ENCODE measurements at regions of chr16 and their contacts with region 1.

Region 1: GRCh38 chr16:19086322-19087199 is 19.1 kb downstream of the COQ7 start:
- DNase-seq: peak; percentile 88 to 90
- ATAC-seq: peak; percentile 92

Region 2: DNA sequence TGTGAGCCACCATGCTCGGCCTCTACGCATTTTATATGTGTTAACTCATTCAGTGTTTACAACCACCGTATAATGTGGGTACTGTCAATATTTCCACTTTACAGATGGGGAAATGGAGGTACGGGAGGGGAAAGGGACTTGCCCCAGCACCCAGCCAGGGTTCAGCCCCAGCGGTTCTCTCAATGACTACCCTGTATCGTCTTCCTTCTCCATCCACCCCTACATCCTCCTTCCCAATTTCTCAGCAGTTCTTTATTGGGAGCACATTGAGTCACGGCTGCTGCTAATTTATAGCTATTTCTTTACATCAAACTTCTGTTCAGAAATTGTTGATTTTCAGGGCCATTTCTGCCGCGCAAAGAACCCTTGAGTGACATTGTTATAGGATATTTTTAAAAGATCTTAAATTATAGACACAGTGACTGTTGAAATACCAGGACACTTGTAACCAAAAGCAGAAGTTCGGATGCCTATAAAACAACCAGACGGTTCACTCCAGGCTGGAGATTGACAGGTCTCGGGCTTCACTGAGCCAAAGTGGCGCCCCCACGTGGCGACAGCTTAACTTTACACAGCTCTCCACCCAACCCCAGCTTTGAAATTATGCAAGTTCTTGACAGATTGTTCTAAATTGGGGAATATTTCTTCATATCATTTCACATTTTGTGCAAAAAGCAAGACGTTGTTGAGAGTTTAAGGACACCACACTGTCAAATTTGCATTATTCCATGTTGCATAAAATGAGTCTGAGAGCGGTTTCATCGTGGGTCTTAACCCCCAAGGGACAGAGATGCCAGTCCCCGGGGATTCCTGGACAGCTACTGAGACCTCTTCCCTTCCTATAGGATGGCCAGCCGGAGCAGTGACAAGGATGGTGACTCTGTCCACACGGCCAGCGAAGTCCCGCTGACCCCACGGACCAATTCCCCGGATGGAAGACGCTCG is 93.3 kb after region 1 on chr16:
- intact Hi-C with region 1: loop called in 1 of 2 experiments (anchors 10 kb)
- DNase-seq: peak; percentile 56 to 77
- ATAC-seq: peak; percentile 93

Region 3: DNA sequence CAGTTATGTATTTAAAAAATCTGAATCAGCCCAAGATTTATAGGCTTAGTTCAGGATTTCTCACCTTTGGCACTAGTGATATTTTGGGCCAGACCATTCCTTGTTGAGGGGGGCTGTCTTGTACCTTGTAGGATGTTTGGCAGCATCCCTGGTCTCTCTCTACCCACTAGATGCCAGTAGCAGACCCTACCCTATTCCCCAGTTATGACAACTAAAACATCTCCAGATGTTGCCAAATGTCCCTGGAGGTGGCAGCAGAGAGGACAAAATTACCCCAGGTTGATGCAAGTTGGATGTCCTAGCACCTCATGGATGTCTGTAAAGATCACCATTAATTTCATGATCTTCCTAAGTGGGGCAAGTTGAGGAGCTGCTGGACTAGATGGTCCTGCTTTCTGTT is 127.3 kb after region 1 on chr16:
- intact Hi-C with region 1: no loop called
- DNase-seq: no peak
- ATAC-seq: no peak

Region 4: GRCh38 chr16:19375561-19376158 is 289.1 kb after region 1 on chr16:
- intact Hi-C with region 1: loop called (anchors 2 to 10 kb)
- DNase-seq: peak in 1 of 2 donors; percentile 40
- ATAC-seq: peak; percentile 77